ENCODE measurements at regions of chr3 and their contacts with region 1.

Region 1: GRCh38 chr3:187974871-187975271 is 179.1 kb upstream of the LPP start:
- DNase-seq: no peak
- ATAC-seq: peak; percentile 10
- H3K4me3 Mint-ChIP-seq: peak overlapping the region; percentile 74
- H3K27ac Mint-ChIP-seq: peak overlapping the region; percentile 81
- H3K4me1 Mint-ChIP-seq: peaks cover 61% of the 10 kb centered on the region
- H3K27me3 Mint-ChIP-seq: peaks cover 5% of the 10 kb centered on the region
- CTCF ChIP-seq: no peak

Region 2: GRCh38 chr3:187465503-187465902 is 509.4 kb before region 1 on chr3:
- CTCF ChIA-PET with region 1: no interaction called
- POLR2A ChIA-PET with region 1: no interaction called
- intact Hi-C with region 1: no loop called
- DNase-seq: no peak
- ATAC-seq: no peak
- H3K4me3 Mint-ChIP-seq: no peak overlapping the region
- H3K27ac Mint-ChIP-seq: no peak overlapping the region
- H3K4me1 Mint-ChIP-seq: no peaks in the 10 kb centered on the region
- H3K27me3 Mint-ChIP-seq: peaks cover 12% of the 10 kb centered on the region
- CTCF ChIP-seq: no peak

Region 3: GRCh38 chr3:187919048-187919447 is 55.8 kb before region 1 on chr3:
- CTCF ChIA-PET with region 1: no interaction called
- POLR2A ChIA-PET with region 1: no interaction called
- intact Hi-C with region 1: loop called (anchors 1 kb)
- DNase-seq: peak; percentile 36
- ATAC-seq: peak; percentile 89
- H3K4me3 Mint-ChIP-seq: peak overlapping the region; percentile 77
- H3K27ac Mint-ChIP-seq: peak overlapping the region; percentile 86
- H3K4me1 Mint-ChIP-seq: peaks cover 32% of the 10 kb centered on the region
- H3K27me3 Mint-ChIP-seq: peaks cover 15% of the 10 kb centered on the region
- CTCF ChIP-seq: no peak

Region 4: DNA sequence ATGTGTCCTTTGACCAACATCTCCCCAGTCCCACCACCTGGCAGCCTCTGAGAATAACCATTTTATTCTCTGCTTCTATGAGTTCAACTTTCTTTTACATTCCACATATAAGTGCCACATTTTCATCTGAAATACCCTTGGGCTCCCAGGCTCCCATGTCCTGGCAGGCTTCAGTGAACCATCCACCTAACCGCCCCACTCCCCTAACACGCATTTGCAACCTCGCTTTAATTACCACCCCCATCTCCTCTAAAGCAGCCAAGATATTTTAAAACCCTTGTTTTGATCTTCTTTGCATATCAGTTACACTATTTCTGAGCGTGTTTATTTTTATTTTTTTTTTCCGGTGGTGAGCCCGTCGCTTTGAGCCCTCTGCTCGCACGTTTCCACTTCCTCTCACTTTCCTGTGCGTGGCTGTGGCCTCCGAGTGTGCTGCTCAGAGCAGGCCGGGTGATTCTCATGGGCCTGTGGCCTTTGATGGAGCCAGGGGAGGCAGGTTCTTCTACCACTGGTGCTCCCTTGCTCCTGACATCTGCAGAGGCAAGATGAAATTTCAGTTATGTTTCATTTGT is 16.4 kb before region 1 on chr3:
- CTCF ChIA-PET with region 1: interaction called, 3 read pairs
- POLR2A ChIA-PET with region 1: interaction called, 3 read pairs
- intact Hi-C with region 1: loop called (anchors 2 kb)
- DNase-seq: no peak
- ATAC-seq: peak; percentile 85
- H3K4me3 Mint-ChIP-seq: peak overlapping the region; percentile 75
- H3K27ac Mint-ChIP-seq: peak overlapping the region; percentile 25
- H3K4me1 Mint-ChIP-seq: peaks cover 14% of the 10 kb centered on the region
- H3K27me3 Mint-ChIP-seq: peaks cover 5% of the 10 kb centered on the region
- CTCF ChIP-seq: no peak

Region 5: GRCh38 chr3:188052169-188053030 is 77.5 kb after region 1 on chr3:
- CTCF ChIA-PET with region 1: no interaction called
- POLR2A ChIA-PET with region 1: interaction called, 3 read pairs
- intact Hi-C with region 1: loop called (anchors 5 kb)
- DNase-seq: no peak
- ATAC-seq: no peak
- H3K4me3 Mint-ChIP-seq: no peak overlapping the region
- H3K27ac Mint-ChIP-seq: no peak overlapping the region
- H3K4me1 Mint-ChIP-seq: peaks cover 12% of the 10 kb centered on the region
- H3K27me3 Mint-ChIP-seq: no peaks in the 10 kb centered on the region
- CTCF ChIP-seq: no peak

Region 6: DNA sequence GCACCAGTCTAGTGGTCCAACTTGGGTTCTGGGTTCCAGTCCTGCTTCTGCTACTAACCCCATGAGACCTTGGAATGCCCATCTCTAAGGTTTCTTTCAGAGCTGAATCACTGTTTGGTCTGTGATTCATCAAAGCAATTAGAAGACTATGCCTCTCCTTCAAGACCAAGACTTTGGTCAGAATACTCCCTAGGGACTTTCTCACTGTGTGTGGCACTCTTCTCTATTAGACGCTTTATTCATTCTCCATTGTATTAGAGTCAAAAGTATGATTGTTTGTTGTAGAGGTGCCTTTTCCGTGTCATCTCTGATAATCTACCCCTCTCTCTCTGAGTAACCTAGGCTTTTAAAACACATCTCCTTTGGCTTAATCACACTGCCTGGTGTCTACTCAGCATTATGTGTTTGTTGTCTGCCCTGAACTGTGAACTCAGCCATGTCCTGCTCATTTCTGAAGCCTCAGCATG is 269.6 kb after region 1 on chr3:
- CTCF ChIA-PET with region 1: no interaction called
- POLR2A ChIA-PET with region 1: no interaction called
- intact Hi-C with region 1: loop called (anchors 2 kb)
- DNase-seq: no peak
- ATAC-seq: peak; percentile 78
- H3K4me3 Mint-ChIP-seq: peak overlapping the region; percentile 24
- H3K27ac Mint-ChIP-seq: peak overlapping the region; percentile 62
- H3K4me1 Mint-ChIP-seq: peaks cover 74% of the 10 kb centered on the region
- H3K27me3 Mint-ChIP-seq: no peaks in the 10 kb centered on the region
- CTCF ChIP-seq: no peak

Region 7: DNA sequence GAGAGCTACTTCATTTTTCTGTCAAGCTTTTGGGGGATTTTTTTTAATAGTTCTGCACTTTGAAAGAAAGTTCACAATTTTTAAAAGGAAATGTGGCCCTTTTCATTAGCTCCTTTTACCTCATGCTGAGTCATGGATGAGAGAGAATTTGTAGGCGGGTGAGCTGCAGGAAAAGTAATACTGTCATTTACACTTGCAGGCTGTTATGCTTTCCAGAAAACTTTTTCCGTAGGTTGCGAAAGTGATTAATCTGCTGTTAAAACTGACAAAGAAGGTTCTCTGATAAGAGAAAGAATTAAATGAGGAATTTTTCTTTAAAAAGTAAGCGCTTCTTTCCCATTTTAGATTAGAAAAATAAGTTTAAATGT is 609.3 kb after region 1 on chr3:
- CTCF ChIA-PET with region 1: no interaction called
- POLR2A ChIA-PET with region 1: interaction called, 4 read pairs
- intact Hi-C with region 1: loop called (anchors 2 kb)
- DNase-seq: no peak
- ATAC-seq: peak; percentile 8
- H3K4me3 Mint-ChIP-seq: no peak overlapping the region
- H3K27ac Mint-ChIP-seq: no peak overlapping the region
- H3K4me1 Mint-ChIP-seq: peaks cover 31% of the 10 kb centered on the region
- H3K27me3 Mint-ChIP-seq: no peaks in the 10 kb centered on the region
- CTCF ChIP-seq: no peak

Region 8: DNA sequence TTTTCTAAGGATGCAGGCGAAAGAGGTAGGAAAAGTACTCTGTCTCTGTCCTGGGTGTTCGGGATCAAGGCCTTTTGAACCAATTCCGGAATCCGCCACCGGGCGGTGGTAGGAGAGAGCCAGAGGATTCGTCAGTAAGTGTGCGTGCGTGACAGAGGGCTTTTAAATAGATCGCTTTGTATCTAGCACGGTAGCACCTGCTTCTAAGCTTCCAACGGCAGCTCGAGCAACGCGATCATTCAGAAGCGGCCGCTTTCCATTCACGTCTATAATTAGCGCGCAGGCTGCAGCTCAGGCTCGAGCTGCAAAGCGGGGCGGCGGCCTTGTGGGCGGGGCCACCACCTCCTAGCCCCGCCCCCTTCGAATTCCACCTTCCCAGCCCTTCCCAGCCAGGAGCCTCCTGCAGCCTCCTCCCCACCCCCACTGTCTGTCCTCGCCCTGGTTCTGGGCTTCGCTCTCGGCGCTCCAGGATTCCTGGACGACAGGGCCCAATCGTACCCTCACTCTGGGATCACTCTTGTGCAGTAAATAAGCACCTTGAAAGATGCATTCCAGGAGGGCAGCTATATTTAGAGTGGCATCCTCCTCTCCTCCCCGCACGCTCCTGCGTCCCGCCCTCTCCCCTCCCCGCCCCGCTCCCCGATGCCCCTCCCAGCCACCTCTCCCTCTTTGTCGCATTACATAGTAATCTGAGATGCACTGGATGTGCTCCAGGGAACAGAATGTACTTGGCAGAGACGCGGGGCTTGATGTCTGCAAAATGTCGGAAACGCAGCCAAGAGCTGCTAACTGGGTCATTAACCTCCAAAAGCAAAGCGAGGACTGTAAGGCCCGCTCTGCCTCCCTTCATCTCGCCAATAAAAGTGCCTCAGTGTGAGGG is 972.8 kb after region 1 on chr3:
- CTCF ChIA-PET with region 1: no interaction called
- POLR2A ChIA-PET with region 1: no interaction called
- intact Hi-C with region 1: loop called (anchors 2 kb)
- DNase-seq: no peak
- ATAC-seq: peak; percentile 19
- H3K4me3 Mint-ChIP-seq: peak overlapping the region; percentile 70
- H3K27ac Mint-ChIP-seq: no peak overlapping the region
- H3K4me1 Mint-ChIP-seq: peaks cover 43% of the 10 kb centered on the region
- H3K27me3 Mint-ChIP-seq: peaks cover 13% of the 10 kb centered on the region
- CTCF ChIP-seq: no peak

Measured in activated B cell treated with CpG ODN at 0.5 μM for 24 hours (primary cell).